Activated CD4-positive, alpha-beta memory T cell treated with anti-CD3 and anti-CD28 coated beads for 36 hours (primary cell): ENCODE measurements at regions of chr6 and their contacts with region 1.

Region 1: DNA sequence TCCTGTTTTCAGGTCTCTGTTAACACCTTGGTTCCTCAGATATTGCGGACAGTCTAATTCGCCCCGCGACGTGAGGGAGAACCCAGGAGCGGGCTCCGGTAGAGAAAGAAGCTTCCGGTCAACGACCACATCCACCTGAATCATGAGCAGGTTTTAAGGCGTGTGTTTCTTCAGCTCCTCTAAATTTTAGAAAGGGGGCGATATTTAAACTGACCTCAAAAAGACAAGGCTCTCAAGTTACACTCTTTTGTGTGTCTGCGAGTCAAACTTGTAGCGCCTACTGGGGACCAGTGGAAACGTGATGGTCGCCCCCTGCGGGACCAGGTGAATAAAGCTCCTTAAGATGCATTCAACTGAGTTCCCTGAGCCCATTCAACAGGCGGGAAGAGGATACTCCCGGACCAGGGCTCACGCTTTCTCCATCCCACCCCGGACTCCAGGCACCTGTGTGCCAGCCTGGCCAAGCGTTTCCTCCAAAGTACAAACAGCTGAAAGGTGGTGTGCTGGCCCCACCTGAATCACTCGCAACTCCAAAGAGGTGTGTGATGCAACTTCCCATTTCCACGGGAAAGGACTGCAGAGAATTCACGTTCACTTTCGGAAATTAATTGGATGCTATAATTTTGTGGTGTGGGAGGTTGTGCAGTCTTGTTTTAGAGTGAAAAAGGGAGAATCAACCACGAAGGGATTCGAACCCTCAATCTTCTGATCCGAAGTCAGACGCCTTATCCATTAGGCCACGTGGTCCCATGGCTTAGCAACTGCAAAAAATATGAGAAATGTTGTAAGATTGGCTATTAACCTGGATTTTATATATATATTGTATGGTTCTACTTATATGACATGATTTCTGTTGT is 17.0 kb downstream of the GPX5 start:
- DNase-seq: peak; percentile 75
- H3K4me3 Mint-ChIP-seq: peak overlapping the region; percentile 79
- H3K27ac Mint-ChIP-seq: peak overlapping the region; percentile 60
- H3K4me1 Mint-ChIP-seq: peaks cover 19% of the 10 kb centered on the region
- H3K27me3 Mint-ChIP-seq: peaks cover 29% of the 10 kb centered on the region

Region 2: GRCh38 chr6:28489366-28490204 is 53.1 kb before region 1 on chr6:
- CTCF ChIA-PET with region 1: no interaction called
- POLR2A ChIA-PET with region 1: no interaction called
- intact Hi-C with region 1: loop called (anchors 5 kb)
- DNase-seq: peak; percentile 66
- H3K4me3 Mint-ChIP-seq: peak overlapping the region; percentile 56
- H3K27ac Mint-ChIP-seq: no peak overlapping the region
- H3K4me1 Mint-ChIP-seq: peaks cover 16% of the 10 kb centered on the region
- H3K27me3 Mint-ChIP-seq: peaks cover 63% of the 10 kb centered on the region

Region 3: GRCh38 chr6:28506807-28507475 is 35.7 kb before region 1 on chr6:
- CTCF ChIA-PET with region 1: no interaction called
- POLR2A ChIA-PET with region 1: no interaction called
- intact Hi-C with region 1: no loop called
- DNase-seq: no peak
- H3K4me3 Mint-ChIP-seq: no peak overlapping the region
- H3K27ac Mint-ChIP-seq: no peak overlapping the region
- H3K4me1 Mint-ChIP-seq: peaks cover 10% of the 10 kb centered on the region
- H3K27me3 Mint-ChIP-seq: peaks cover 6% of the 10 kb centered on the region

Region 4: GRCh38 chr6:28586962-28587745 is 44.5 kb after region 1 on chr6:
- CTCF ChIA-PET with region 1: interaction called, 3 read pairs
- POLR2A ChIA-PET with region 1: no interaction called
- intact Hi-C with region 1: loop called (anchors 2 kb)
- DNase-seq: peak; percentile 77
- H3K4me3 Mint-ChIP-seq: peak overlapping the region; percentile 73
- H3K27ac Mint-ChIP-seq: no peak overlapping the region
- H3K4me1 Mint-ChIP-seq: peaks cover 20% of the 10 kb centered on the region
- H3K27me3 Mint-ChIP-seq: peaks cover 73% of the 10 kb centered on the region

Region 5: GRCh38 chr6:28648035-28648877 is 105.6 kb after region 1 on chr6:
- CTCF ChIA-PET with region 1: no interaction called
- POLR2A ChIA-PET with region 1: no interaction called
- intact Hi-C with region 1: loop called (anchors 1 kb)
- DNase-seq: peak; percentile 71
- H3K4me3 Mint-ChIP-seq: peak overlapping the region; percentile 83
- H3K27ac Mint-ChIP-seq: no peak overlapping the region
- H3K4me1 Mint-ChIP-seq: peaks cover 10% of the 10 kb centered on the region
- H3K27me3 Mint-ChIP-seq: peaks cover 56% of the 10 kb centered on the region